Psoas muscle (tissue), 8 donors: ENCODE measurements at regions of chr2 and their contacts with region 1.

Region 1: GRCh38 chr2:177359836-177360595 is 32.6 kb upstream of the AGPS start:
- DNase-seq: no peak
- ATAC-seq: no peak
- H3K4me3 ChIP-seq: no peak overlapping the region
- H3K27ac ChIP-seq: no peak overlapping the region
- H3K4me1 ChIP-seq: peaks cover 8% of the 10 kb centered on the region
- H3K27me3 ChIP-seq: no peaks in the 10 kb centered on the region
- CTCF ChIP-seq: no peak

Region 2: DNA sequence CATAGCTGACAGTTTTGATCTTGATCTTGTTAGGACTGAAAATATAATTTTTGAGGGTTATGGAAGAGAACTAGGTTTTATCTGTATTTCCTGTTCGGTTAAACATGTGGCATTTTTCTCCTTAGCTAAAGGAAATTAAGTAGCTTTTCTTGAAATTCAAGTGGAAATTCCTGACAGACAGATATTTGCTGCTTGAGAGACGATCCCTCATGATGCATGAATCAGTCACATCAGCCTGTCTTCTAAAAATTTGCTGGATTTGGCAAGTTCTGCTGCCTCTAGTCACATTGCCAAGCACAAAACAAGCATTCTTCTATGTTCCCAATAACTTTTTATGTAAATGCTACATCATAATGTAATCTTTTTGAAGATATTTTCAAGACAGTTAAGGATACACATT is 1976.7 kb before region 1 on chr2:
- intact Hi-C with region 1: loop called in 1 of 2 experiments (anchors 10 kb)
- DNase-seq: no peak
- ATAC-seq: no peak
- H3K4me3 ChIP-seq: no peak overlapping the region
- H3K27ac ChIP-seq: no peak overlapping the region
- H3K4me1 ChIP-seq: no peaks in the 10 kb centered on the region
- H3K27me3 ChIP-seq: no peaks in the 10 kb centered on the region
- CTCF ChIP-seq: no peak

Region 3: DNA sequence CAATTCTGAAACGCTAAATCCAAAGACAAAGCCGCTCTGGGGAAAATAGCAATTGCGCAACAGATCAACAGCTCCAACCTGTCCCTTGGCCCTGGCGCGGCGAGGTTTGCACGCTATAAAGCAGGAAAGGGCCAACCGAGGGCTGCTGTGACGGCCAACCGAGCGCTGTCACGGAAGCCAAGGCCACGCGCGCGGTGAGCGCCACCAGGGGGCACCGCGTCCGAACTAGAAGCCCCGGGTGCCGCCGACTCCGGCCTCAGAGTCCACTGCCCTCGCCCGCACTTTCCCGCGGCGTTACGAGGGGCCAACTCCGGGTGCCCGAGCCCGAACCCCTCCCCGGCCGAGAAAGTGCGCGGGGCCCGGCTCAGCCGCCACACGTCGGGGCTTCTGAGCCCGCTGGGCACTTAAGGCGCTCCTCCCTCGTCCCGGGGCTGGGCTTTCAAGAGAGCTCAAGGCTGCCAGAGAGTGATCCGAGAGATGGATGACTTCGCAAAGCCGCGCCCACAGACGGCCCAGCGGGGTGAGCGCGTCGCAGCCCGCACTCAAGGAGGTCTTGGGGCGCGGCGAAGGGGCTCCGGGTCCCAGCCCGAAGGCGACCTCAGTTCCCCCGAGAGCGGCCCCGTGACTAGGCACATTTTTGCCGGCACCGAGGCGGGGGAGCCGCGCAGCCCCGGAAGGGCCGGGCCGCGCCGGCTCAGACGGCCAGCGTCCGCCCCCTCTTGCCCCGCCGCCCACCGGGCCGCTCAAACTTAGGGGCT is 96.4 kb before region 1 on chr2:
- intact Hi-C with region 1: no loop called
- DNase-seq: peak; percentile 99 to 100
- ATAC-seq: peak; percentile 82 to 84 (median 83)
- H3K4me3 ChIP-seq: peak overlapping the region; percentile 86
- H3K27ac ChIP-seq: peak overlapping the region; percentile 99
- H3K4me1 ChIP-seq: peaks cover 44% of the 10 kb centered on the region
- H3K27me3 ChIP-seq: no peaks in the 10 kb centered on the region
- CTCF ChIP-seq: peak; percentile 88